Esophagus squamous epithelium (tissue), 5 donors: ENCODE measurements at regions of chr13 and their contacts with region 1.

Region 1: DNA sequence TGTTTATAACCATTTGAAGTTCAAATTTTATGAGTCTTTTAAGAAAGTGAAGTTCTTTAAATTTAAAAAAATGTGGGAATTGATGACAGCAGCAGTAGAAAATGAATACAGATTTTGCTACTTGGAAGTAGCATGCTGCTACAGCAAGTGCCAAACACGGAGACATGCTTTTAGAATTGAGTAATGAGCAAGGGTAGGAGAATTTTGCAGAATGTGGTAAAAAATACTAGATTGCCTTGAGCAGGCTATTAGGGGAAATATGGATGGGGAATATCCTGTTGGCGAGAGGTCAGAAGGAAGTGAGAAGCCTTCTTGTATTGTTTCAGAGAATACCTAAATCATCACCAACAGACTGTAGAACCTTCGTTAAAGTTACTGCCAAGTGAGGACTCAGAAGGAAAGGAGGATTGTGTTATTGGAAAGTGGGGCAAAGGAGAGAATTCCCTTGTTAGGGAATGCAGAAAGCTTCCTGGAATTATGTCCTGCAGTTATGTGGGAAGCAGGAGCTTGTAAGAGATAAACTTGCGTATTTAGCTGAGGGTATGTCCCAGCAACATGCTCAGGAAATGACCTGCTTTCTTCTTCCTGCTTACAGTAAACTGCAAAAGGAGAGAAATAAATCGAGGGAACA is 32.4 kb upstream of the OXGR1 start:
- DNase-seq: no peak
- H3K4me3 ChIP-seq: no peak overlapping the region
- H3K27ac ChIP-seq: no peak overlapping the region
- H3K4me1 ChIP-seq: no peaks in the 10 kb centered on the region
- H3K27me3 ChIP-seq: no peaks in the 10 kb centered on the region
- CTCF ChIP-seq: no peak
- POLR2A ChIP-seq: no peak

Region 2: GRCh38 chr13:97091196-97091595 is 64.5 kb after region 1 on chr13:
- intact Hi-C with region 1: no loop called
- DNase-seq: no peak
- H3K4me3 ChIP-seq: no peak overlapping the region
- H3K27ac ChIP-seq: no peak overlapping the region
- H3K4me1 ChIP-seq: no peaks in the 10 kb centered on the region
- H3K27me3 ChIP-seq: no peaks in the 10 kb centered on the region
- CTCF ChIP-seq: no peak
- POLR2A ChIP-seq: no peak

Region 3: GRCh38 chr13:97359181-97360057 is 332.8 kb after region 1 on chr13:
- intact Hi-C with region 1: loop called (anchors 10 kb)
- DNase-seq: no peak
- H3K4me3 ChIP-seq: no peak overlapping the region
- H3K27ac ChIP-seq: peak overlapping the region in 2 of 4 donors; percentile 34 to 37
- H3K4me1 ChIP-seq: peaks cover 0 to 7% (median 0%) of the 10 kb centered on the region in 3 donors
- H3K27me3 ChIP-seq: no peaks in the 10 kb centered on the region
- CTCF ChIP-seq: peak; percentile 74 to 87 (median 80)
- POLR2A ChIP-seq: no peak